ENCODE measurements at regions of chr14 and their contacts with region 1.

Region 1: DNA sequence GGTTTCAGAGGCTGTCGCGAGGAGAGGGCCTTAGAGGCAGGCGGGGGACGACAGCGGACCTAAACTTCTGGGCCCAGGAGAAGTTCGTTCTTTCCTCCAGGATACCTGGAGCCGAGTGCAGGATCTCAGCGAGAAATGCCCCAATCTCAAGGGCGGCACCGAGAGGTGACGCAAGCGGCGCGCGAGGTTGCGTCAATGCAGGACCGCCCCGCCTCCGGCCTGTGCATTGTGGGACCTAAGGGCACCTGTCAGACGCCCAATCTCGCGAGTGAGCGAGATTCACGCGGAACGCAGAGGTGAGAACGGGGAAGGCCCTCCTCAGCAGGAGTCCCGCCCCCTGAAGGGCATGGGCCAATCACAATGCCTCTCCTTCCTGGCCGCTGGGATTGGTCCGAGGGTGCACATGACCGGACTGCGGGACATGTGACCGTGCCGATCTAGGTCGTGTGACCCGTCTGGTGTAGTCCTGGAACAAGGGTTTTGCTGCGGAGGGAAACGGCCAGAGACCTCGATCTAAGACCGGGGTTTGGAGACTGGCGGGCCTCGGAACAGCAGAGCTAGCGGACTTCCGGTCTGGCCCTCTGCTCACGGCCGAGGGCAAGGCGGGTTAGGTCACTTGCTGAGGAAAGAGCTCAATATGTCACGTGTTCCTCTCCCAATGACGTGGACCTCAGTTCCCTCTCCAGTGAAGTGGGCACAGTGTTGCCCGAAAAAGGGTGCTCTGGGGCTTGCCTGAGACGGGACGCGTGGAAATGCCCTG is 16.3 kb upstream of the DYNC1H1 start:
- DNase-seq: peak; percentile 100
- ATAC-seq: peak; percentile 98
- H3K4me3 ChIP-seq: peak overlapping the region; percentile 82 to 92
- H3K27ac ChIP-seq: peak overlapping the region; percentile 76
- H3K4me1 ChIP-seq: peaks cover 5 to 7% of the 10 kb centered on the region in 2 experiments
- H3K27me3 ChIP-seq: no peaks in the 10 kb centered on the region
- CTCF ChIP-seq: no peak
- POLR2A ChIP-seq: peak; percentile 93
- RAD21 ChIP-seq: no peak

Region 2: DNA sequence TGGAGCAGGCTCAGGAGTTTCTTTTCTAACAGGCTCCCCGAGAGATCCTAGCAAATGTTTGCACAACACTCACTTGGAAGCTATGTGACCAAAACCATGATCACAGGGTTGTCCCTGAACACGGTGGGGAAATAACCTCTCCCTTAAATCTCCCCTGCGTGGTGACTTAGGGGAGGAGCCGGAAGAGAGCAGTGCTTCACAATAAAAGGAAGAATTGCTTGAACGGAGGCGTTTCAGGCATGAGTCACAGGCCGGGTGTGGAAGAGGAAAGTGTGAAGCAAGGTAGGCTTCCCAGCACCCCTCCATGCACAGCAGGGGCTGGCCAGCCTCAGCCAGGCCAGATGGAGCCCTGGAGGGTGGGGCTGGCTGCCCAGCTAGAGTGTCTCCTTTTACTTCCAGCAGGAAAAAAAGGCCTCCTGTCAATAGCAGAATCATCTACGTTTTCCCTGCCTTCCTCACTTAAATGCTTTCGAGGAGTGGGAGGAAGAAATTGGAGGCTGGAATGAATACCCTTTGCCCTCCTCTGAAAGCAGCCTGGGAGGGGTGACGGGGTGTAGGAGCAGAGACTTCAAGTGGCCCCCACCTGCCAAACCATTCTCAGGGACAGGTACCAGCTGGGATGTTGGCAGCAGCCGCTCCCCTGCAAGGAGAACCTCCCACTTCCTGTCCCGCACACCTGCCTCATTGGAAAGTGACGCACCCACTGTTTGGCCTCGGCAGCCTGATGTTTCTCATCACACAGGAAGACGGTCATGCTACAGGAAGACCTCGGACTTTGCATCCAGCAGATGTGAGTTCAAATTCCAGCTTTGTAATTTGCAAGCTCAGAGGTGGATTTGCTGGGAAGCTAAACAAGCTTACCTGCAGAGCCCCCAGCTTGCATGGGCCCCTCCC is 216.7 kb before region 1 on chr14:
- CTCF ChIA-PET with region 1: no interaction called
- POLR2A ChIA-PET with region 1: no interaction called
- RAD21 ChIA-PET with region 1: no interaction called
- intact Hi-C with region 1: loop called (anchors 2 kb)
- DNase-seq: peak; percentile 86
- ATAC-seq: peak; percentile 91
- H3K4me3 ChIP-seq: peak overlapping the region; percentile 39 to 54
- H3K27ac ChIP-seq: peak overlapping the region; percentile 69
- H3K4me1 ChIP-seq: peaks cover 21 to 49% of the 10 kb centered on the region in 2 experiments
- H3K27me3 ChIP-seq: no peaks in the 10 kb centered on the region
- CTCF ChIP-seq: no peak
- POLR2A ChIP-seq: no peak
- RAD21 ChIP-seq: peak; percentile 55

Region 3: DNA sequence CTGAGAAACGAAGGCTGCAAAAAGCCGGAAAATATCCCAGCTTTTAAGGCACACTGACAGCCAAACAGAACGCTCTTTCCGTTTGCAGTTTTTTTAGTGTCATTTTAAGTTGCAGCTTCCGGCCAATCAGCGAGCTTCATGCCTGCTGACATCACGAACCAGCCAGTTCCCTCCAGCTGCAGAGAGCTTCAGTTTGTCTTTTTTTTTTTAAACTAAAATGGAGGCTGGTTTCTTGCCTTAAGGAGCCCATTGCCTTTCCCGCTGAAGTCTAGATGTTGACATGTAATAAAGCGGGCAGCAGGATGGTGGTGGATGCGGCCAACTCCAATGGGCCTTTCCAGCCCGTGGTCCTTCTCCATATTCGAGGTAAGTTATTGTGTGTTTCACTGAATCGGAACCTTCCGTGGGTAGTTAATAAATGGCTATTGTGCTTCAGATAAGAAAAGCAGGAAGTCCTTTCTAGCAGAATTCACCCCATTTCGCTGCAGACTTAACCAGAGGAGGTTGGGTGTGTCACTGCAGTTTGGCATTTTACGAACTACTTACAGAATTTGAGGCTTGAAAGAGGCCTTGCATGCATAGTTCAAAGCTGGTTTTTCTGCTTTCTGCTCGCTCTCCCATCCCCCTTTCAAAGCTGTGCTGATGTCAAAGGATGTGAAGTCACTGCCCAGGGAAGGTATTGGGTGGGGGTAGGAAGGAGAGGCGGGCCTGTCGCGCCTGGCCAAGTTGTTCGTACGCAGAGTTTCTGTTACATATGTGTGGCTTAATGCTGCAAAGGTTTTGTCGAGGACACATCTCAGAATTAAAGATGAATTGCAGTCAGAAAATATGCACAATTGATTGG is 138.2 kb before region 1 on chr14:
- CTCF ChIA-PET with region 1: no interaction called
- POLR2A ChIA-PET with region 1: interaction called, 10 read pairs
- RAD21 ChIA-PET with region 1: no interaction called
- intact Hi-C with region 1: no loop called
- DNase-seq: peak; percentile 91
- ATAC-seq: peak; percentile 92
- H3K4me3 ChIP-seq: peak overlapping the region; percentile 75 to 76
- H3K27ac ChIP-seq: peak overlapping the region; percentile 82
- H3K4me1 ChIP-seq: peaks cover 7 to 28% of the 10 kb centered on the region in 2 experiments; a peak in 3 of 4 replicates
- H3K27me3 ChIP-seq: no peaks in the 10 kb centered on the region
- CTCF ChIP-seq: no peak
- POLR2A ChIP-seq: peak; percentile 52
- RAD21 ChIP-seq: no peak